ENCODE measurements at regions of chr6 and their contacts with region 1.

Region 1: GRCh38 chr6:53484476-53485280 is 60.2 kb downstream of the GCLC start:
- DNase-seq: peak; percentile 22 to 31
- ATAC-seq: peak; percentile 75 to 78
- H3K4me3 ChIP-seq: peak overlapping the region in 2 of 4 donors; percentile 0 to 23
- H3K27ac ChIP-seq: peak overlapping the region in 3 of 4 donors; percentile 16 to 59 (median 43)
- H3K4me1 ChIP-seq: peaks cover 3 to 14% of the 10 kb centered on the region in 2 donors
- H3K27me3 ChIP-seq: no peaks in the 10 kb centered on the region
- CTCF ChIP-seq: peak; percentile 81 to 96 (median 91)
- POLR2A ChIP-seq: no peak

Region 2: DNA sequence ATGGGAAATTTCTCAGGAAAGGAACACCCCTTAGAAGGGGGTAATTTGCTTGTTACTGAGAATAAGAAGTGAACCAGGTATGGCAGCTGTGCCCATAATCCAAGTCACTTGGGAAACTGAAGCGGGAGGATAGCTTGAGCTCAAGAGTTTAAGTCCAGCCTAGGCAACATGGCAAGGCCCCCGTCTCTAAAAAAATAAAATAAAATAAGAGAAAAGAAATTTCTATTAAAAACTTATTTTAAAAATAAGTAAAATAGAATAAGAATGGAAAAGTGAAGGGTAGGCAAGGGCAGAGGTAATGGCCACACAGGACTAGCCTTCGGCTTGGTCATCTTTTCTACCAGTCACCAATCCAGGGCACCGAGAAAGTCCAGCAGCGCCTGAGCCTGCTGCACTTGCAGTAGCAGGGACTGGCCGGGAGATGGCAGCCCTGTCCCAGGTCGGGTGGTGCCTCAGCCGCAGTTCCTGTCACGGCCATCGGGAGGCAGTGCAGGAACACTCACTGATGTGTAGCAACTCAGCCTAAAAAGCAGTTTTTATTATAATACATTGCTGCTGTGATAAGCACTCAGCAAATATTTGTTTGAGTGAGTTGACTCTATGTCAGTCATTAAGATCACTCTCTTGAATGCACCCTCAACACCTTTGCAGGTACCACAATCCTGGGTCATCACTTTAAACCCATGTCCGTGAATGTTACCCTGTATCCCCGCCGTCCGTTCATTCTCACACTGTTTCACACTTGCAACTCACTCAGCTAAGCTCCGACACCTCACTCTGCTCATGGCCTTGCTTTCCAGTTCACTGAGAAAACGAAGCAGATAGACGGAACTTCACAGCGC is 312.9 kb before region 1 on chr6:
- in situ Hi-C with region 1: loop called (anchors 5 to 10 kb)
- intact Hi-C with region 1: loop called (anchors 1 kb)
- DNase-seq: peak; percentile 66 to 77
- ATAC-seq: peak; percentile 73 to 75
- H3K4me3 ChIP-seq: no peak overlapping the region
- H3K27ac ChIP-seq: no peak overlapping the region
- H3K4me1 ChIP-seq: no peaks in the 10 kb centered on the region
- H3K27me3 ChIP-seq: no peaks in the 10 kb centered on the region
- CTCF ChIP-seq: peak; percentile 97 to 100 (median 100)
- POLR2A ChIP-seq: no peak

Region 3: GRCh38 chr6:53179961-53180651 is 304.6 kb before region 1 on chr6:
- in situ Hi-C with region 1: loop called in 2 of 4 experiments (anchors 5 to 10 kb)
- intact Hi-C with region 1: no loop called
- DNase-seq: peak in 1 of 2 donors; percentile 17
- ATAC-seq: no peak
- H3K4me3 ChIP-seq: no peak overlapping the region
- H3K27ac ChIP-seq: peak overlapping the region in 1 of 4 donors; percentile 22
- H3K4me1 ChIP-seq: no peaks in the 10 kb centered on the region
- H3K27me3 ChIP-seq: no peaks in the 10 kb centered on the region
- CTCF ChIP-seq: no peak
- POLR2A ChIP-seq: no peak